ENCODE measurements at regions of chr7 and their contacts with region 1.

Region 1: GRCh38 chr7:1925349-1925748 is 255.3 kb downstream of the ELFN1 start:
- DNase-seq: peak; percentile 37
- H3K4me3 Mint-ChIP-seq: no peak overlapping the region
- H3K27ac Mint-ChIP-seq: no peak overlapping the region
- H3K4me1 Mint-ChIP-seq: peaks cover 75% of the 10 kb centered on the region
- H3K27me3 Mint-ChIP-seq: peaks cover 6% of the 10 kb centered on the region

Region 2: GRCh38 chr7:1569833-1570633 is 355.3 kb before region 1 on chr7 and contains the start of gene PSMG3:
- CTCF ChIA-PET with region 1: no interaction called
- intact Hi-C with region 1: loop called (anchors 5 kb)
- DNase-seq: peak; percentile 91
- H3K4me3 Mint-ChIP-seq: peak within 1 kb of the TSS; percentile 87
- H3K27ac Mint-ChIP-seq: peak within 1 kb of the TSS; percentile 87
- H3K4me1 Mint-ChIP-seq: peaks cover 37% of the 10 kb centered on the region
- H3K27me3 Mint-ChIP-seq: no peaks in the 10 kb centered on the region
- total RNA-seq, gene PSMG3: 29.8 to 33.9 TPM

Region 3: GRCh38 chr7:1823376-1824150 is 101.8 kb before region 1 on chr7:
- CTCF ChIA-PET with region 1: no interaction called
- intact Hi-C with region 1: loop called (anchors 5 kb)
- DNase-seq: no peak
- H3K4me3 Mint-ChIP-seq: no peak overlapping the region
- H3K27ac Mint-ChIP-seq: no peak overlapping the region
- H3K4me1 Mint-ChIP-seq: peaks cover 43% of the 10 kb centered on the region
- H3K27me3 Mint-ChIP-seq: no peaks in the 10 kb centered on the region